Calu3 (cell line): ENCODE measurements at regions of chr11 and their contacts with region 1.

Region 1: GRCh38 chr11:126989942-126990715 is 10.4 kb downstream of the KIRREL3 start:
- DNase-seq: peak; percentile 74
- H3K4me3 Mint-ChIP-seq: no peak overlapping the region
- H3K27ac Mint-ChIP-seq: no peak overlapping the region
- H3K4me1 Mint-ChIP-seq: peaks cover 10% of the 10 kb centered on the region
- H3K27me3 Mint-ChIP-seq: no peaks in the 10 kb centered on the region
- CTCF ChIP-seq: peak; percentile 78

Region 2: GRCh38 chr11:126607374-126607773 is 382.8 kb before region 1 on chr11:
- CTCF ChIA-PET with region 1: interaction called, 3 read pairs
- intact Hi-C with region 1: loop called (anchors 2 kb)
- DNase-seq: peak; percentile 67
- H3K4me3 Mint-ChIP-seq: no peak overlapping the region
- H3K27ac Mint-ChIP-seq: no peak overlapping the region
- H3K4me1 Mint-ChIP-seq: no peaks in the 10 kb centered on the region
- H3K27me3 Mint-ChIP-seq: peaks cover 63% of the 10 kb centered on the region
- CTCF ChIP-seq: peak; percentile 59

Region 3: DNA sequence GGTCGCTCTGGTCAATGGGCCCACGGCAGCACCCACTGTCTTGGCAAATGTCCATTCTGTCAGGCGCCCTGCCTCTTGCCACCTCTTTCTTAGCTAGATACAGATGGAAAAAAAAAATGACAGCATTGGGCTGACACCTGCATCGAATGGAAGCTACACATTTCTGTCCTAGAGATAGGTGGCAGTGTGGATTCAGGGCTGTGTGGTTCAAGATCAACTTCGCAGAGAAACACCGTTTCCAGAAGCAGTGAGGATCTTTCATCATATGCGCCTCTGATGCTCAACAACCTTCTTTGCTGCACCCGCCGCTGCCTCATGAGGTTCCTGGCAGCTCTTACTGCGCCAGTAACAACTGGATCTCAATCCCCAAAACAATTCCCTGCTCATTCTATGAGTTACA is 225.9 kb before region 1 on chr11:
- CTCF ChIA-PET with region 1: interaction called, 5 read pairs
- intact Hi-C with region 1: loop called (anchors 1 kb)
- DNase-seq: peak; percentile 3
- H3K4me3 Mint-ChIP-seq: no peak overlapping the region
- H3K27ac Mint-ChIP-seq: no peak overlapping the region
- H3K4me1 Mint-ChIP-seq: no peaks in the 10 kb centered on the region
- H3K27me3 Mint-ChIP-seq: peaks cover 26% of the 10 kb centered on the region
- CTCF ChIP-seq: no peak

Region 4: DNA sequence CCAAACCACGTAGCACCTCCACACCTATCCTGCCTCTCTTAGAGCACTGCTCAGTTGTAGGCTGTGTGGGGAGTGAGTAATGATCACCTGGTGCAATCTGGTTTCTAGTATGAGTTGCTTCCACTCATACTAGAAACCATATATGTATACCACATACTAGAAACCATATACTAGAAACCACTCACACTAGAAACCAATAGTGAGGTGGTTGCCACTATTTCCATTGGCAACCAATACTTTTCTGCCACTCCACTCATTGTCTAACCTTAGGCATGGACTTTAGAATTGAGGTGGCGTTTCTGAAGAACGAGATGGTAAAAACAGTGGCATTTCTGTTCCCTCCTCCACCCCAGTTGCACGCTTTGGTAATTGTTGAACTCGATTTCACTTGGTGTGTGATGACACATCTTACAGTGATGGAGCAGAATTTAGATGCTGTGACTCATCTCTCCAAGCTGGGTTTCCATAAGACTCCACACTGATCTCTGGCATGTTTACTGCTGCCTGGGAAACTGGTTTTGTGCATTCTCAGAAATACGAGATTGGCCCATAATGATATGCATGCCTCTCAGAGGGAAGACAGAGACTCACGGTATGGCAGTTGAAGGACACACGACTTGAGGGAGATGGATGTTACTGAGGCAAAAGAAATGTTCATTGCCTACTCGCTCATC is 72.5 kb before region 1 on chr11:
- CTCF ChIA-PET with region 1: no interaction called
- intact Hi-C with region 1: no loop called
- DNase-seq: peak; percentile 10
- H3K4me3 Mint-ChIP-seq: no peak overlapping the region
- H3K27ac Mint-ChIP-seq: peak overlapping the region; percentile 19
- H3K4me1 Mint-ChIP-seq: peaks cover 7% of the 10 kb centered on the region
- H3K27me3 Mint-ChIP-seq: no peaks in the 10 kb centered on the region
- CTCF ChIP-seq: no peak